ENCODE measurements at regions of chr7 and their contacts with region 1.

Region 1: DNA sequence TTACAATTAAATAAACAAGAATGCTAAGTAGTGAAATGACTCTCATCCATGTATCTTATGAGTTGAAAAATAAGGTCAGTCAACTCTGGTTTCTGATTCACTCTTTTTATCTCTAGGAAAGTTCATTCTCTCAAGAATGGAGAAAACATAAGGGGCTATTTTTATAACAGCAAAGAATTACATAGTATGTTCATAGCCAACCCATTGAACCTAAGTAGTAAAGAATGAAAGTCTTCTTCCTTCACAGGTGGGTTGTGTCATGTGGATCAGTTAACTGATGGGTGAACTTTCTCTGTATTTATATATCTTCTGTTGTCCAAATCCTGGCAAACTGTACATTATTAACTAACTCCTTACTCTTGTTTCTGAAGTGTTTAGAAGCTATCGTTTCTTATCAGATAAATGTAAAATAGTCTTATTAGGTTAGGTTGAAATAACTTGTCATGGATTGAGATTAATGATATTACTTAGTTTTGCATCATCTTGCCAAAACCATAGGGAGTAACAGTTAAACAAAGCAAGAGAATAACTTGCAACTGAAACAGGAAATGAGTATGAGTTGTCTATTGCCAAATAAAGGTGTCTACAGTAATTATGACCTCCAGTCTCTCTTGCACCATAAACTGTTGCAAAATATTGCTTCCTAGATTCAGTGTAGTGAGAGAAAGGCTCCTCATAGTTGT is 86.8 kb downstream of the ANKRD7 start:
- DNase-seq: no peak
- H3K4me3 Mint-ChIP-seq: no peak overlapping the region
- H3K27ac Mint-ChIP-seq: peak overlapping the region; percentile 44
- H3K4me1 Mint-ChIP-seq: peaks cover 24% of the 10 kb centered on the region
- H3K27me3 Mint-ChIP-seq: peaks cover 2% of the 10 kb centered on the region

Region 2: DNA sequence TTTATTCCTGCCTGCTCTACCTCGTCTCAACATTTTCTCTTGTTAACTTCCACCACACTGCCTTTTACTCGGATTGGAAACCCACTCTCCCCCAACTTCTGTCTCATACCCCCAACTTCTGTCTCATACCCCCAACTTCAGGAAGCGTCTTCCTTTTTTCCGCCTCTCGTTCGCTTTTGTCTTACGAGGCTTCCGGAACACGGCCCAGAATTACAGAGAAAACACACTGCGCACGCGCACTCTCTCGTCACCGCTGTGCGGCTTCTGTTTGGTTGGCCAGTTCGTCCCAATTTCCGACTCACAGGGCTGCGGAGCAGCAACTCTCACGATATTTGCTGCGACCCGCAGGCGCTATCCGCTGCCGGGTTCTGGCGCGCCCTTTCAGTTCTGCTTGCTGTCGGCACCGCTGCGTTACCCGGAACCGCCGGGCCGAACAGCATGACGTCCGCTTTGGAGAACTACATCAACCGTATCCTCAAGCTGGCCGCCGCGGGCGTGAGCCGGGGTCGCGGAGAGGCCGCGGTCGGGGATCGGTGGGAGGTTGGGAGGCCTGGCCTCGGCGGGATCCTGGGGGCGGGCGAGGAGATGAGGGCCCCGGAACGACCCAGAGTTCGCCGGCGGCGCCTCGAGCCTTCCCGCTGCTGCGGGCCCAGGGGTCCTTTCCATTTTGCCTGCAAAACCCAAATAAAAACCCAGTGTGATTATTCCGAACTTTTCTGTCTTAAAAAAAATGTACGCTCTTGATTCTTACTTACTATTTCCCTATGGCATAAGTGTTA is 127.3 kb before region 1 on chr7 and contains the start of gene LSM8:
- intact Hi-C with region 1: loop called (anchors 5 kb)
- DNase-seq: peak; percentile 99
- H3K4me3 Mint-ChIP-seq: peak within 1 kb of the TSS; percentile 99
- H3K27ac Mint-ChIP-seq: peak within 1 kb of the TSS; percentile 99
- H3K4me1 Mint-ChIP-seq: peaks cover 32% of the 10 kb centered on the region
- H3K27me3 Mint-ChIP-seq: no peaks in the 10 kb centered on the region
- total RNA-seq, gene LSM8: 49.4 and 59.9 TPM in 2 replicates

Region 3: GRCh38 chr7:118288098-118288497 is 23.2 kb before region 1 on chr7:
- intact Hi-C with region 1: loop called (anchors 2 kb)
- DNase-seq: peak; percentile 77
- H3K4me3 Mint-ChIP-seq: peak overlapping the region; percentile 61
- H3K27ac Mint-ChIP-seq: peak overlapping the region; percentile 84
- H3K4me1 Mint-ChIP-seq: peaks cover 22% of the 10 kb centered on the region
- H3K27me3 Mint-ChIP-seq: peaks cover 41% of the 10 kb centered on the region

Region 4: GRCh38 chr7:118350260-118350659 is 39.0 kb after region 1 on chr7:
- intact Hi-C with region 1: loop called (anchors 2 kb)
- DNase-seq: no peak
- H3K4me3 Mint-ChIP-seq: no peak overlapping the region
- H3K27ac Mint-ChIP-seq: no peak overlapping the region
- H3K4me1 Mint-ChIP-seq: peaks cover 2% of the 10 kb centered on the region
- H3K27me3 Mint-ChIP-seq: peaks cover 3% of the 10 kb centered on the region

Measured in activated CD4-positive, alpha-beta T cell treated with anti-CD3 and anti-CD28 coated beads, Interleukin-2, amount 10 ng/mL, durations not matched to agents 24 days and 14 days (primary cell).